Heart right ventricle (tissue), 16 donors: ENCODE measurements at regions of chr12 and their contacts with region 1.

Region 1: DNA sequence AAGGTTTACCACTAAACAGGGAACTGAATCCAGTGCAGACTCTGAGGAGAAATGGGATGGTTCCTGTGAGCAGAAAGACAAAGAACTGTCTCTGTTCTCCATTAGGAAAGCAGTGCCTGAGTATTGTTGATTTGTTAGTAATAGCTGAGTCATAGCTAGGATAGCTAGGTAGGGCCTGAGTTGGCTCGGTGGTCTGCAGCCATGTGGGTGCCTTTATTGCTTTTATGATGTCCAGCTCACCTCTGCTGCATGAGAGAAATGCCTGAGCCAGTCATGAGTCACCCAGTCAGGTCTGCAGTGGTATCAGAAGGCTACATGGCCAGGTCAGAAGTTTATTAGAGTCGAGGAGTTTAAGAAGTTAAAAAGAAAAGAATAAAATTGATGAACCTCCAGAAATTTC is 24.2 kb downstream of the TRHDE start:
- DNase-seq: no peak
- ATAC-seq: no peak
- H3K4me3 ChIP-seq: no peak overlapping the region
- H3K27ac ChIP-seq: no peak overlapping the region
- H3K4me1 ChIP-seq: no peaks in the 10 kb centered on the region
- H3K27me3 ChIP-seq: peaks cover 0 to 4% (median 0%) of the 10 kb centered on the region in 7 donors
- CTCF ChIP-seq: no peak

Region 2: DNA sequence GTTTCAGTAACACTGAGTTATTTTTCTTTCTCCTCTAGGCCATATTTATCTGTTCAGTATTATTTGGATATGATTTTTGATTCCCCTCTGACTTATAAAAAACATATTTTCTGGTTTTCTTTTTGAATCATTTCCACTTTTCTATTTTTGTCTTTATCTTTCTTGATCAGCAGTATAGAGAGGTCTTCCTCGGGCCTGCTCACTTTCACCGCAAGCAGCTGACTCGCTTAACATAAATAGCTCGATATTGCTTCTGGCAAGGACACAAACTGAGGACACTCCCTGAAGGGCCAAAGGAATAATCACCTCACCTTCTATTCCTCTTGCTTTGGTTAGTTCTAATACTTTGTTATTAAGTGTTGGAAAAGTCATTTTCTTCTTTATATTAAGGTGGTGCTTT is 50.0 kb before region 1 on chr12:
- intact Hi-C with region 1: loop called in 1 of 10 experiments (anchors 5 kb)
- DNase-seq: no peak
- ATAC-seq: no peak
- H3K4me3 ChIP-seq: no peak overlapping the region
- H3K27ac ChIP-seq: no peak overlapping the region
- H3K4me1 ChIP-seq: no peaks in the 10 kb centered on the region
- H3K27me3 ChIP-seq: no peaks in the 10 kb centered on the region
- CTCF ChIP-seq: no peak